GM23248 (cell line): ENCODE measurements at regions of chr15 and their contacts with region 1.

Region 1: GRCh38 chr15:73318463-73319351 is 50.1 kb downstream of the HCN4 start:
- DNase-seq: peak; percentile 20
- H3K4me3 ChIP-seq: no peak overlapping the region
- H3K27ac ChIP-seq: no peak overlapping the region
- H3K4me1 ChIP-seq: no peaks in the 10 kb centered on the region
- H3K27me3 ChIP-seq: no peaks in the 10 kb centered on the region; the same call in 1 of the 2 replicates

Region 2: GRCh38 chr15:73212424-73212823 is 106.3 kb before region 1 on chr15:
- in situ Hi-C with region 1: no loop called
- DNase-seq: peak; percentile 34
- H3K4me3 ChIP-seq: no peak overlapping the region
- H3K27ac ChIP-seq: no peak overlapping the region
- H3K4me1 ChIP-seq: no peaks in the 10 kb centered on the region
- H3K27me3 ChIP-seq: no peaks in the 10 kb centered on the region

Region 3: GRCh38 chr15:73258271-73259108 is 60.2 kb before region 1 on chr15:
- in situ Hi-C with region 1: loop called (anchors 10 kb)
- DNase-seq: no peak
- H3K4me3 ChIP-seq: no peak overlapping the region
- H3K27ac ChIP-seq: no peak overlapping the region
- H3K4me1 ChIP-seq: no peaks in the 10 kb centered on the region
- H3K27me3 ChIP-seq: no peaks in the 10 kb centered on the region

Region 4: GRCh38 chr15:73437543-73438109 is 118.9 kb after region 1 on chr15:
- in situ Hi-C with region 1: no loop called
- DNase-seq: no peak
- H3K4me3 ChIP-seq: no peak overlapping the region
- H3K27ac ChIP-seq: no peak overlapping the region
- H3K4me1 ChIP-seq: no peaks in the 10 kb centered on the region
- H3K27me3 ChIP-seq: peaks cover 50% of the 10 kb centered on the region